Left ventricle myocardium superior (tissue), 1 donor: ENCODE measurements at regions of chr4 and their contacts with region 1.

Region 1: GRCh38 chr4:39977489-39978377 is at the start of gene PDS5A:
- DNase-seq: peak; percentile 94
- ATAC-seq: peak; percentile 93
- total RNA-seq, gene PDS5A: 34.8 TPM

Region 2: DNA sequence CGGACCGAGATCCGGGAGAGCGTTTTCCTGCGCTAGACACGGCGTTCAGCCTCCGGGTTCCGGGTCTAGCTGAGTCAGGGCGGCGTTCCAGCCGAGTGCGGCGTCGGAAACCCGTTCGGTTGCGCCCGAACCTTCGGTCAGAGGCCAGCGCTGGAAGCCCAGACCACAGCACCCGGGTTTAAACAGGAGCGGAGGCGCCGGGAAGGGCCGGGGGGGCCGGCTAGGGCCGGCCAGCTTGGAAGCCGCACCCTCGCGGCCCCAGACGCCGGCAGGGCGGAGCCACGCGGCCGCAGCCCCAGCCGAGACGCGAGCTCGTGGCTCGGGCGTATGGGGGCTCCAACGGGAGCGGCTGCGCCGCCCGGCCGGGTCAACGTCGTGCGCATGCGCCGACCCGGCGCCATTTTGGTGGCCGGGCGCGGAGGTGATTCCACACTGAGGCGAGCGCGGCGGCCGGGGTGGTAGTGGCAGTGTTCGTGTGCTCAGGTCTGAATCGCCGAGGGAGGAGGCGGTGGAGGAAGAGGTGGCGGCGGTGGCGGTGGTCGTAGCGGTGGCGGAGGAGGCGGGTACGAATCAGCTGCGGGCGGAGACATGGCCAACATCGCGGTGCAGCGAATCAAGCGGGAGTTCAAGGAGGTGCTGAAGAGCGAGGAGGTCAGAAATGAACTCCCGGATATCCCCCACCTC is 279.9 kb before region 1 on chr4 and contains the start of gene UBE2K:
- intact Hi-C with region 1: loop called (anchors 5 kb)
- DNase-seq: peak; percentile 96
- ATAC-seq: peak; percentile 99
- total RNA-seq, gene UBE2K: 53.8 TPM

Region 3: DNA sequence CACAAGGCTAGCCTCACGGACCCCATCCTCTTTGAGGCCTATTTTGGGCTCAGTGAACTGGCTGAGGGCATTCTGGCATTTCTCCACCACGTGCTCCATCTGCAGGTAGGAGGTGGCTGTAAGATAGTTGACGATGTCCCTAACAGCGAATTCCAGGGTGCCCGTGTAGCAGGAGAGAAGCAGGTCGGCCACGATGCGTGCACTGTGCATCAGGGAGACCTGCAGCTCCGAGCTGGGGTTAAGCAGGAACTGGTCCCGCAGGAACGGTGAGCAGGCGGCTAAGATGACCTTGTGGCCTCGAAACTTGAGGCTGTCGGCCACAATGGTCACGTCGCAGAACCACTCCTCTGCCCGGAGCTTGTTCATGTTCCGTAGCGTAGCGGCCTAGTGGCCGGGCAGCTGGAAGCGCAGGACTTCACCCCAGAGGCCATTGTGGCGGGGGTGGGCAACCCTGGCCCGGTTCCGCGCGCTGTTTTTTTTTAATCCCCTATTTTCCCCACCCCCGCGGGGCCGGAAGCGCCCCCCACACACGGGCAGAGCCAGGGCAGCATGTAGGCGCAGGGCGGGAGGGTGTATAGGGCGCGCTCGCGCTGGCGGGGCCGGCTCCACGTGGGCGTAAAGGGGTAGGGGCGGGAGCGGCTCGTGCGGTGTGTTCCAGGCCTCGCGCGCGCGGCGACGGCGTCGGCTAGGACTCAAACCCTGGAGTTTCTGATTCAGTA is 206.6 kb before region 1 on chr4:
- intact Hi-C with region 1: no loop called
- DNase-seq: no peak
- ATAC-seq: no peak

Region 4: DNA sequence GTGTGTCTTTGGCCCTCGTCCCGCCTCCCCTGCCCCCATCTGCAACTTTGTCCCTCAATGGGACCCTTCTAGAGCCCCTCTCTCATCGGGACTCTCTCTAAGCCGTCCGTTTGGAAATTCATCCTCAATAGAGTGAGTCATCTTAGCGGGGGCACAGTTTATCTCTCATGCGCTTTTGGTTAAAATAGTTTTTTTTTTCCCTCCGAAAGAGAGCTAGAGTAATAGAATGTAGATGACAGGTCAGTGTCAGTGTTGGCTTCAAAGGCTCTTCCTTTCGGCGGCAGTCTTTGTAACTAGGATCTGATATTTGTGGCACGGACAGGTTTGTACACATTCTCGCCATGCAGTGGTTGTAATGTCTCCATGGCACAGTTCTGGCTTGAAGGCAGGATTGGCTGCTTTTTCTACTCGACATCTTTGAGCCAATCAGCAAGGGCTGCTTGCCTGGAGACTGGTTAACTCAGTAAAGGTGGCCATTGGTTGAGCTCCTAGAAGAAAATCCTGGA is 79.9 kb after region 1 on chr4:
- intact Hi-C with region 1: no loop called
- DNase-seq: peak; percentile 50
- ATAC-seq: peak; percentile 76

Region 5: DNA sequence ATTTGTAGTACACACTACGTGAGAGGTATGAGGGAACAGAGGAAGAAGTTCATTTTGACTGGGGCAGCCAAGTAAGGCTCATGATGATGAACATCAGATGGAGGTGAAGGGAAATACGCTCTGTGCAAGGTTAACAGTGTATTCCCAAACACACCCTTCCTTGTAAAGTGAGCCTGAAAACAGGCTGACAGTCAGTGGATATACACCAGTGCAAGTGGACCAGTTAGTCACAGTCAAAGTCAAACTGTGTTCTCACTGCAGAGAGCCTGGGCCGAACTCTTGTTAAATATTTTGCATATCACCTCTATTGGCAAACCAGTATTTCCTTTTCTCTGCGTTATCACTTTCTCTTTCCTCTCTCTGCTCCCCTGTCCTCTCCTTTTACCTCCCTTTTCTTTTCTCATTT is 195.7 kb after region 1 on chr4:
- intact Hi-C with region 1: no loop called
- DNase-seq: no peak
- ATAC-seq: no peak

Region 6: DNA sequence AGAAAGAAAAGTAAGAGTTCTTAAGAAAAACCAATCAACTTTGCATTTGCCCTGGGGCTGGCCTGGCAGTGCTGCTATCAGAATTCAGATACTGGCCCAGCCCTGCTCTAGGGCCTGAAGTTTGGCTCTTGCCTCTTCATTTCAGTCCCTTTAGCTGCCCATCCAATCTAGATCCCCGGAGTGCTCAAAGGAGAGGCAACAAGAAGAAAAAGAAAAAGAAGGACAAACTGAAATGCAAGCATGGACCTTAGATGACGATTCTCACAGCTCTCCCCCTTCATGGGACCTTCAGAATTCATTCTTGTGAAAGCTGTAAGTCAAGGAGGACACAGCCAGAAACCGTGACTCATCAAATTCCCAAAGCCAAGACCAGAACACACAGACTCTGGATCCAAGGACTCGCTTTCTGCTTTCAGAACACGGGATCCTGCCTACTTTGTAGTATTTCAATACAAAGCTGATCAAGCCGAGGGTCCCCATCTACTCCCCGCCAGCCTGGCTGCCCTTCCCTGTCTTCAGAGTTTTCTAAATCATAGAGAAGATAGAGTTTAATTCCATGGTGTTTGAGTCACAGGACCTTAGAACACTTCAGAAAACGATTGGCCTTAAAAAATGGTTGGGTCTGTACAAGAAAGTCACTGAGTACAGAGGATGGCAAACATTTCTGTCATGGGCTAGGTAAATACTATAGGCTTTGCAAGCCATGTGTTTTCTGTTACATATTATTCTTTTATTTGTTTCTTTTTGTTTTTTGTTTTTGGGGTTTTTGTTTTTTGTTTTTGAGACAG is 548.3 kb after region 1 on chr4:
- intact Hi-C with region 1: no loop called
- DNase-seq: no peak
- ATAC-seq: peak; percentile 88